AG04450 (cell line): ENCODE measurements at regions of chr21 and their contacts with region 1.

Region 1: DNA sequence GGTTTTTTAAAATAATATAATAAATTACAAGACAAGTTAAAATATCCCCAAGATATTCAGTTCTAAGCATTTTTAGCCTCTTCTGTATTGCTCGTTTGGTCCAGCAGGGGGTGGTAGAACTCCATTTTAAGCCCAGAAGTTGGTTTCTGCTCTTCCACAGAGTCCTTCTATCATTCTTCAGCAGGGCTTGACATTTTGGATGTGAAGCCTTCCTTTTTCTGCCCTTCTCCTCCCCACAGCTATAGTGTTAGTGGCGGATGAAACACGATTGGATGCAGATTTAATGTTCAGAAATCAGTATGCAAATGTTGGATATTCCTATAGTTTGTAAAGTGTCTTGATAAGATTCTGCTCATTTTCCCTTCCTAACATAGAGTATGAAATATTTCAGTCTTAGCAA is 1.4 kb downstream of the NCAM2 start:
- DNase-seq: no peak
- H3K4me3 ChIP-seq: no peak overlapping the region
- H3K27ac ChIP-seq: no peak overlapping the region
- H3K27me3 ChIP-seq: peaks cover 4% of the 10 kb centered on the region
- CTCF ChIP-seq: peak; percentile 91

Region 2: GRCh38 chr21:20971296-20971921 is 28.2 kb before region 1 on chr21:
- CTCF ChIA-PET with region 1: no interaction called
- POLR2A ChIA-PET with region 1: no interaction called
- DNase-seq: peak; percentile 2
- H3K4me3 ChIP-seq: no peak overlapping the region
- H3K27ac ChIP-seq: no peak overlapping the region
- H3K27me3 ChIP-seq: no peaks in the 10 kb centered on the region
- CTCF ChIP-seq: peak; percentile 59

Region 3: GRCh38 chr21:21101911-21102310 is 102.3 kb after region 1 on chr21:
- CTCF ChIA-PET with region 1: interaction called, 21 read pairs
- POLR2A ChIA-PET with region 1: no interaction called
- DNase-seq: peak; percentile 43
- H3K4me3 ChIP-seq: no peak overlapping the region
- H3K27ac ChIP-seq: no peak overlapping the region
- H3K27me3 ChIP-seq: no peaks in the 10 kb centered on the region
- CTCF ChIP-seq: peak; percentile 28; the same call in 1 of the 2 replicates

Region 4: DNA sequence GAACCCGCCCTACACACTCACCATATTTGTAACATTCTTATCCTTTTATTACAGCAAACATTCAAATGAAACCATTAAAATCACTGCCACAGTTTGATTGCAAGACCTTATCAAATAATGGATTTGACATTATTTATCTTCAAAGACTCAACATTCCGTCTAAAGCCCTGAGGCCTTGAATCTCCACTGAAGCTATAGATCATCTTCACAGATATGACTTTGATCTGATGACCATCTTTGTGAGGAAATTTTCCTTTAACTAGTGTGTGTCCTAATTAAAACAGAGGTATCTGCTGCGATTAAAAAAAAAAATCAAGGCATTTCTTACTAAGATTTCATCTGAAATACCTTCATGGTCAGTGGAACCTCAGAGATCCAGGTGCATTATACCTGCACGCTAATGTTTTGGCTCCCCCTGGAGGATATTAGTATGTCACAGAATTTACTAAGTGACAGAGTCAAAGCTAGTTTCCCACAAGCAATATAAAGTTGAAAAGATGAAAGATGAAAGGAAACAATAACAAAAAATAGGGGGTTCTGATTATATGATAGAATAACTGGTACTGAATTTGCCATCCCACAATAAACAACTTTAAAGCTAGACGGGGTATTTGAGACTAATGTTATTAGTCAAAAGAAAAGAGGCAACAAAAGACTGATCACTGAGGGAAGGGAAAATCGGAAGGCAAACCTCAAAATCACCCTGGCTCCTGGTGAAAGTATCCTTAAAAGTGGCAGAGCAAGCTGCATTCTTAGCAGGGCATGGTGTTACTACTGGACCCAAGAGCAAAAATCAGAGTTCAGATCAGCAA is 922.0 kb after region 1 on chr21:
- CTCF ChIA-PET with region 1: interaction called, 20 read pairs
- POLR2A ChIA-PET with region 1: no interaction called
- DNase-seq: no peak
- H3K4me3 ChIP-seq: no peak overlapping the region
- H3K27ac ChIP-seq: no peak overlapping the region
- H3K27me3 ChIP-seq: no peaks in the 10 kb centered on the region
- CTCF ChIP-seq: peak; percentile 63

Region 5: GRCh38 chr21:22791986-22792560 is 1792.4 kb after region 1 on chr21:
- CTCF ChIA-PET with region 1: interaction called, 25 read pairs
- POLR2A ChIA-PET with region 1: no interaction called
- DNase-seq: peak; percentile 6
- H3K4me3 ChIP-seq: no peak overlapping the region
- H3K27ac ChIP-seq: no peak overlapping the region
- H3K27me3 ChIP-seq: no peaks in the 10 kb centered on the region
- CTCF ChIP-seq: peak; percentile 67